GM12878 (cell line): ENCODE measurements at regions of chr3 and their contacts with region 1.

Region 1: DNA sequence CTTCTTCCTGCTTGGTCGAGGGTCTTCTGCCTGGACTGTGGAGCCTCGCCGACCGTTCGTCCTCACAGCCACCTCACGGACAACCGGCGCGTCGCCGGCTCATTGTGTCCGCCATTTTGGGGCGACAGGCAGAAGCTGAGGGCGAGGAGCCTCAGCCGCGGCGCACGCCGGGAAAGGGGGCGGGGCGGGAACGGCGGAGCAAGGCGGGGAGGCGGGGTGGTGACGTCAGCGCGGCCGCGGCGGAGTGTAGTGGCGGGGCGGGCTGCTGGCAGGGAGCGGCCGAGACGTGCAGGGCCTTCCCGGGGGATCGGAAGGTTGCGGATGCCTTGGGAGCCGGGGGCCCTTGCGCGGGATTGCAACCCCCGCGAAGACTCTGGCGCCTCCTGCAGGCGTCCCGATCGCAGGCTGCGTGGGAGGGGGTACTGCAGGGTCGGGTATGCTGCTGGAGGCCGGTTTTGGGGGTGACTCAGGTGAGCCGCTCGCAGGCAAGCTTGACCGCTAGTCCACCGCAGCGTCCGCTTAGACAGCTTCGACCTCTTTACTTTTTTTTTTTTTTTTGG is at the start of gene WDR82:
- DNase-seq: peak; percentile 67
- ATAC-seq: peak; percentile 84
- H3K4me3 ChIP-seq: peak within 1 kb of the TSS; percentile 91
- H3K27ac ChIP-seq: peak within 1 kb of the TSS; percentile 82
- H3K4me1 ChIP-seq: no peaks in the 10 kb centered on the region; the same call in 1 of the 2 replicates
- H3K27me3 ChIP-seq: no peaks in the 10 kb centered on the region
- CTCF ChIP-seq: peak; percentile 33 to 46 (median 43); a peak in 5 of 6 replicates
- EP300 ChIP-seq: no peak
- POLR2A ChIP-seq: peak; percentile 100
- RAD21 ChIP-seq: peak; percentile 37
- polyA plus RNA-seq, gene WDR82: 10.4 to 12.5 TPM

Region 2: DNA sequence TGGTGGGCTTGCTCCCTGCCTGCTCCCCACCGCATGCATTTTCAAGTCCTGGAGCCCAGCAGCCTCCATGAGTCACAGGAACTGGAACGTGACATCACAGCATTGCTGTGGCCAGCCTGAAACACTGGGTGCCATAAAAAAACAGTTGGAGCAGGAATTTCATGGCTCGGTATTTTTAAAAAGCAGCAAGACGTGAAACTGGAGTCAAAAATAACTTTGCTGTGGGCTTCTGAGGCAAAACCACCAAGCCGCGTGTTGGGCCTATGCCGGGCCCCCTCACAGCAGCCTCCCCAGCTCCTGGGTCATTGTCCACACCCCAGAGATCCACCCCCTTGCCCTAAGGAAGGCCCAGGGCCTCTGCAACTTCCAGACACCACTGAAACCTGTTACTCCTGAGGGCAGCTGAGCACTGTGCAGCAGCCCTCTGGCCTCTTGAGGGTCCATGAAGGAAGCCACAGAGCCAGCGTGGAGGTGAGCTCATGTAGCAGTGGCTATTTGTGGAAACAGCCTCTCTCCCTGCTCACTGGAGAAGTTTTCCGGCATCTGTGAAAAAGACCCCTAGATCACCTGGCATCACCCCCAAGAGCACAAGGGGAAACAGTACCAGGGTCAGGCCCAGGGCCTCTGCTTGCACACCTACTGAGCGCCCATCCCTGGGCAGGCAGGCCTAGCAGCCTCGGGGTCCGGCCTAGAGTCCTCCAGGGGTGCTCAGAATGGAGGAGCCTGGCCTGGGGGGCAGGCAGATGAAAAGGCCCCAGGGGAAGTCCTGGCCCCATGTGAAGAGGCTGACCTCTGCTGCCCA is 188.3 kb before region 1 on chr3:
- CTCF ChIA-PET with region 1: no interaction called
- POLR2A ChIA-PET with region 1: no interaction called
- RAD21 ChIA-PET with region 1: no interaction called
- SMC1A ChIA-PET with region 1: no interaction called
- in situ Hi-C with region 1: no loop called
- intact Hi-C with region 1: no loop called
- DNase-seq: no peak
- ATAC-seq: no peak
- H3K4me3 ChIP-seq: no peak overlapping the region
- H3K27ac ChIP-seq: no peak overlapping the region
- H3K4me1 ChIP-seq: peaks cover 25% of the 10 kb centered on the region
- H3K27me3 ChIP-seq: no peaks in the 10 kb centered on the region
- CTCF ChIP-seq: no peak
- EP300 ChIP-seq: no peak
- POLR2A ChIP-seq: no peak
- RAD21 ChIP-seq: no peak

Region 3: DNA sequence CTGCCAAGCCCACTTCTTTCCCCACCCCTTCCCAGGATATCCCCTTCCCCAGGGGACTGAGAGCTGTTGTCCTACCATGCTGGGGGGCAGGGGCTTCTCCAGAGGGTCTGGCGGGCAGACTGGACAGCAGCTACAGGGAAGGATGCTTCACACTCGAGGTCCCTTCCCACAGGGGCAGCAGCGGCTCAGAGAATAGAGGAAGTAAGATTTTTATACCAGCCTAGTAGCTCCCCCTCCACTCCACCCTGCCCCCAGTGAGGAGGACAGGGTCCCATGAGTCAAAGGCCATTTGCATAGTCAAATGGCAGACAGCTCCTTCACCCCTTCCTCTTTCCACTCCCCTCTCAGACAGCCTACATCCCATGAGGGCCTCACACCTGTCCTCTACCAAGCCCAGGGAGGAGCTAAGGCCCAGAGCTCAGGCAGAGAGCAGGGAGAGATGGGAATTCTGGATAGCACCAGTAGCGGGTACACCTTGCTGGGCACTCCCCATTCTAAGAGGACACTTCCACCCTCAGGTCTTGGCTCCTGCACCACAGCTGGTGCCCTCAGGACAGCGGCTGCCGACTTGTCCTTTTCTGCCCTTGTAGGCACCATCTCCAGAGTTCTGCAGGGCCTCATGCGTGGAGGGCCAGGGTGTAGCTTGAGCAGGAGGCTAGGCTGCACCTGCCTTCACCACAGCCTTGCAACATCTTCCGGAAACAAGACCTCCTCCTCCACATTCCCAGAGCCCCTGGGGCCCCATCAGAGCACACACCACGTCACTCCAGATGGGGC is 53.0 kb before region 1 on chr3 and contains the start of gene TLR9:
- CTCF ChIA-PET with region 1: interaction called, 68 read pairs
- POLR2A ChIA-PET with region 1: interaction called, 34 read pairs
- RAD21 ChIA-PET with region 1: interaction called, 27 read pairs
- SMC1A ChIA-PET with region 1: interaction called, 14 read pairs
- in situ Hi-C with region 1: no loop called
- intact Hi-C with region 1: no loop called
- DNase-seq: peak; percentile 71
- ATAC-seq: peak; percentile 91
- H3K4me3 ChIP-seq: peak within 1 kb of the TSS; percentile 60
- H3K27ac ChIP-seq: peak within 1 kb of the TSS; percentile 76
- H3K4me1 ChIP-seq: peaks cover 22% of the 10 kb centered on the region
- H3K27me3 ChIP-seq: no peaks in the 10 kb centered on the region
- CTCF ChIP-seq: no peak
- EP300 ChIP-seq: peak in 1 of 2 experiments; percentile 51; a peak in 1 of 4 replicates
- POLR2A ChIP-seq: peak; percentile 80
- RAD21 ChIP-seq: no peak
- polyA plus RNA-seq, gene TLR9: 0.10 TPM in 1 of 2 experiments, not detected in the other

Region 4: GRCh38 chr3:52238761-52239701 is 39.6 kb before region 1 on chr3 and contains the start of gene TWF2:
- CTCF ChIA-PET with region 1: interaction called, 87 read pairs
- POLR2A ChIA-PET with region 1: interaction called, 34 read pairs
- RAD21 ChIA-PET with region 1: interaction called, 36 read pairs
- SMC1A ChIA-PET with region 1: interaction called, 62 read pairs
- in situ Hi-C with region 1: no loop called
- intact Hi-C with region 1: loop called (anchors 2 kb)
- DNase-seq: no peak
- ATAC-seq: peak; percentile 87
- H3K4me3 ChIP-seq: peak within 1 kb of the TSS; percentile 93
- H3K27ac ChIP-seq: peak within 1 kb of the TSS; percentile 88
- H3K4me1 ChIP-seq: peaks cover 40% of the 10 kb centered on the region
- H3K27me3 ChIP-seq: no peaks in the 10 kb centered on the region
- CTCF ChIP-seq: peak; percentile 43 to 49 (median 43)
- EP300 ChIP-seq: no peak
- POLR2A ChIP-seq: peak; percentile 91
- RAD21 ChIP-seq: peak; percentile 30; the same call in 1 of the 2 replicates
- polyA plus RNA-seq, gene TWF2: 0.16 to 3.4 TPM

Region 5: DNA sequence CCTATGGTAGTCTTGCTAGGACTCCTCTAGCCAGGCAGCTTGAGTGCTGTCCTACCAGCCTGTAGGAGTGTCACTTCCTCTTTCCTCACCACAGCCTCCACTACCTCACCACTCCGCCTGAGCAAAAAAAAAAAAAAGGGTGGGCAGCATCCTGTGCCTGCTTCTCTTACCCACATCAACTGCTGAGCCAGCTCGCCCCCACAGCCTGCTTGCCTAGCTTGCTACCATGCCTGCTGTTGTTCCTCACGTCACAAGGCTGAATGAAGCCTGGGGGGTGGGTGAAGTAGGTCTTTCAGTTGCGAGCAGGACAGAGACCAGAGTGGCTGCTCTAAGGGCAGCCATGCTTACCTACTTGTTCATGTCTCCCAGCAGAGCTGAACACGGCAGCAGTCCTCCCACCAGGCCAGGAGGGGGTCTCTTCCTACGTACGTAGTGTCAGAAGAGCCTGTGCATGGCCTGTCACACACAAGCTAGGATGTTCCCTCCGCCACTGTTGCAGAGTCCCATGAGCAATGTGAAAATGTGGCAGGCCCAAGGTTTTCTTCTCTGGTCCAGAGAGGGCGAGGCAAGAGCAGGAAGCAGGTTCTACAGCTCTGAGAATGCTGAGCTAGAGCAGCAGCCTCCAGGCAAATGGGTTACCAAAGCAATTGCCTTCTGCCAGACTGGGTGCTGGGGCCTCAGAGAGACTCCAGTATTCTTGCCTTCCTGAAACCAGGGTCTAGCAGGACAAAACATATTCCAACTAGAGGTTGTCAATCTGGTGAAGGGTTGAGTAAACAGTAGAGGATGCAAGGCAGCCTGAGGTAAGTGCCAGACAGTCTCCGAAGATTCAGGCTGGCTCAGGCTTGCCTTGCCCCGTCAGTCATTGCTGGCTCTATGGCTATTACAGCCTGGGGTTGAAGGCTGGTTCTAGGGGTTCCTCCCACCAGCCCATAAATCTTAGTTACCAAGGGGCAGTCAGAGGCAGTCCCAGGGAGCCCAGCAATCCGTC is 25.0 kb before region 1 on chr3:
- CTCF ChIA-PET with region 1: interaction called, 20 read pairs
- POLR2A ChIA-PET with region 1: interaction called, 60 read pairs
- RAD21 ChIA-PET with region 1: interaction called, 20 read pairs
- SMC1A ChIA-PET with region 1: interaction called, 30 read pairs
- in situ Hi-C with region 1: no loop called
- intact Hi-C with region 1: no loop called
- DNase-seq: peak; percentile 85
- ATAC-seq: peak; percentile 98
- H3K4me3 ChIP-seq: no peak overlapping the region
- H3K27ac ChIP-seq: peak overlapping the region; percentile 88
- H3K4me1 ChIP-seq: peaks cover 18% of the 10 kb centered on the region
- H3K27me3 ChIP-seq: no peaks in the 10 kb centered on the region
- CTCF ChIP-seq: no peak
- EP300 ChIP-seq: peak; percentile 66 to 86; a peak in 3 of 4 replicates
- POLR2A ChIP-seq: peak; percentile 75
- RAD21 ChIP-seq: 0 out of 2 replicates have a peak, but pooled peaks have one; percentile 2

Region 6: GRCh38 chr3:52291508-52292181 is 13.1 kb after region 1 on chr3:
- CTCF ChIA-PET with region 1: interaction called, 30 read pairs
- POLR2A ChIA-PET with region 1: interaction called, 48 read pairs
- RAD21 ChIA-PET with region 1: interaction called, 6 read pairs
- SMC1A ChIA-PET with region 1: interaction called, 7 read pairs
- in situ Hi-C with region 1: no loop called
- intact Hi-C with region 1: no loop called
- DNase-seq: no peak
- ATAC-seq: peak; percentile 53
- H3K4me3 ChIP-seq: no peak overlapping the region
- H3K27ac ChIP-seq: no peak overlapping the region
- H3K4me1 ChIP-seq: peaks cover 11% of the 10 kb centered on the region
- H3K27me3 ChIP-seq: no peaks in the 10 kb centered on the region
- CTCF ChIP-seq: peak; percentile 63 to 91 (median 67)
- EP300 ChIP-seq: no peak
- POLR2A ChIP-seq: no peak
- RAD21 ChIP-seq: peak; percentile 93

Region 7: GRCh38 chr3:52400275-52400793 is 121.7 kb after region 1 on chr3:
- CTCF ChIA-PET with region 1: no interaction called
- POLR2A ChIA-PET with region 1: no interaction called
- RAD21 ChIA-PET with region 1: no interaction called
- SMC1A ChIA-PET with region 1: no interaction called
- in situ Hi-C with region 1: no loop called
- intact Hi-C with region 1: no loop called
- DNase-seq: no peak
- ATAC-seq: no peak; the same call in 2 of the 3 replicates
- H3K4me3 ChIP-seq: no peak overlapping the region
- H3K27ac ChIP-seq: no peak overlapping the region
- H3K4me1 ChIP-seq: no peaks in the 10 kb centered on the region
- H3K27me3 ChIP-seq: no peaks in the 10 kb centered on the region
- CTCF ChIP-seq: no peak
- EP300 ChIP-seq: no peak
- POLR2A ChIP-seq: no peak; the same call in 1 of the 2 replicates
- RAD21 ChIP-seq: no peak